IMR-90 (cell line): ENCODE measurements at regions of chr6 and their contacts with region 1.

Region 1: GRCh38 chr6:124961777-124962611 is at the start of gene RNF217:
- DNase-seq: peak; percentile 76
- ATAC-seq: peak; percentile 54
- H3K4me3 ChIP-seq: peak within 1 kb of the TSS; percentile 83
- H3K27ac ChIP-seq: peak within 1 kb of the TSS; percentile 94
- H3K4me1 ChIP-seq: peaks cover 4% of the 10 kb centered on the region; the same call in 1 of the 2 replicates
- H3K27me3 ChIP-seq: no peaks in the 10 kb centered on the region
- CTCF ChIP-seq: 0 out of 2 replicates have a peak, but pooled peaks have one; percentile 17
- POLR2A ChIP-seq: peak; percentile 54
- RAD21 ChIP-seq: no peak
- total RNA-seq, gene RNF217: 16.7 and 20.4 TPM in 2 replicates

Region 2: DNA sequence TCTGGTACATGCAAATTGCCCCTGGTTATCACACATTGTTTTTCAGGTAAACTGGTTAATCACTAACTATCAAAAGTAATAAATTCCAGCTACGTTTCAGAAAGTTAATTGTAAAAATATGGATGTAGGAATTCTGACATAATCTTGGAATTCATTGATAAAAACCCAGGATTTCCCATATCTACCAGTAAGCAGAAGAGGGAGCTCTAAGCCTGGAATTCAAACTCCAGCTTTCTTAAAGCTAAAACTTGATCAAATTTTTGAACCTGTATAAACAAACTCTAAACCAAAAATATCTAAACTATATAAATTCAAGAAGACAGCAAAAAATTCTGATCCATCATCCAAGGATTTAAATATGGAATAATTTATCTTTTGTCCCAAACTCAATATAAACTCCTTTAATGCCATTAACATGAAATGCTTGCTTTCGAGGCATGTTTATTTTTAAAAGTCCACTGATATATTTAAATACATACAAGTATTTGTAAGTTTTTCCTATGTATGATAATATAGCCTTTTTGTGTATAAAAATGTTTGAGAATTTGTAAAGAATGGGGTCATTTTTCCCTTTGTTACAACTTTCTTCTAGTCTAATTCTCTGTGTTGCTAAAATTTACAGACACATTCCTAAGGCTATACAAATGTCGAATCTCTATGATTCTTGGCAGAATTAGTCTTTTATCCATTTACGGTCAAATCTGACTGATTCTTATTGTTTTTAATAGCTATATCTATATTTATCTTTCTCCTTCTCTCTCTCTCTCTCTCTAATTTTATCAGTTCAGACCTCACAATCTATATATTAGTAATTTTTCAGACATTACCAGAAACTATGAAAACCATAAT is 91.2 kb before region 1 on chr6:
- CTCF ChIA-PET with region 1: no interaction called
- POLR2A ChIA-PET with region 1: no interaction called
- dilution Hi-C with region 1: no loop called
- in situ Hi-C with region 1: no loop called
- intact Hi-C with region 1: loop called (anchors 1 kb)
- DNase-seq: peak; percentile 64
- ATAC-seq: peak; percentile 67
- H3K4me3 ChIP-seq: no peak overlapping the region
- H3K27ac ChIP-seq: no peak overlapping the region
- H3K4me1 ChIP-seq: peaks cover 2% of the 10 kb centered on the region; the same call in 1 of the 2 replicates
- H3K27me3 ChIP-seq: no peaks in the 10 kb centered on the region
- CTCF ChIP-seq: peak; percentile 83
- POLR2A ChIP-seq: no peak
- RAD21 ChIP-seq: peak; percentile 86

Region 3: GRCh38 chr6:124941259-124941658 is 20.7 kb before region 1 on chr6:
- CTCF ChIA-PET with region 1: no interaction called
- POLR2A ChIA-PET with region 1: no interaction called
- dilution Hi-C with region 1: no loop called
- in situ Hi-C with region 1: no loop called
- intact Hi-C with region 1: no loop called
- DNase-seq: no peak
- ATAC-seq: no peak
- H3K4me3 ChIP-seq: no peak overlapping the region
- H3K27ac ChIP-seq: no peak overlapping the region
- H3K4me1 ChIP-seq: no peaks in the 10 kb centered on the region
- H3K27me3 ChIP-seq: no peaks in the 10 kb centered on the region
- CTCF ChIP-seq: no peak
- POLR2A ChIP-seq: no peak
- RAD21 ChIP-seq: no peak

Region 4: DNA sequence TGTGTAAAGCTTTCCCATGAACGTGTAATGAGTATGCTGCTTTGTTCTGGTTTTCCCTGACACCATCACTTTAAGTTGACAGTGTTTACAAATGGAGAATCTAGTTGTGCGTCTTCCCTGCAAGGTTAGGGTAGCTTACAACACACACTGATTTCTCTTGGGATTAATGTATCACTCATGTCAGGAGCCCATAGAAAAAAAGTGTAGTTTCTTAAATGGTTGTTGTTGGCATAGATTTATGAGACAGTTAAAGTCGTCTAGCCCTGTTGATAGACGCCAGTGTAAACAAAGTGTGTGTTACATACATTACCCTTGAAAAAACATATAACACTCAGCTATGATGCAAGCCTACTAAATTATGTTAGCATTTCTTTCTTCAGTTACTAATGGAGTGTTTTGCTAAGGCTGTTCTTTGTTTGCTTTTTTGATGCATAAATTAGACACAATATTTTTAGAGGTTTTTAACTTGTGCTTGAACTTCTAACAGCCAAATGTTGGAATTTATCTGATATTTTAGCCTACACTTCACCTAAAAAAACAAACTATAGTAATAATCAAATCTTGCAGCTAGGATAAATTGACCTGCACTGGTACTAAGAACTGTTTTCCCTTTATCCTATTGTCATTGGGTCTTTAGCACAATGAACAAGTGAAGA is 88.8 kb after region 1 on chr6:
- CTCF ChIA-PET with region 1: no interaction called
- POLR2A ChIA-PET with region 1: no interaction called
- dilution Hi-C with region 1: no loop called
- in situ Hi-C with region 1: no loop called
- intact Hi-C with region 1: loop called (anchors 2 kb)
- DNase-seq: peak; percentile 64
- ATAC-seq: peak; percentile 55
- H3K4me3 ChIP-seq: no peak overlapping the region
- H3K27ac ChIP-seq: no peak overlapping the region
- H3K4me1 ChIP-seq: peaks cover 10% of the 10 kb centered on the region
- H3K27me3 ChIP-seq: no peaks in the 10 kb centered on the region
- CTCF ChIP-seq: no peak
- POLR2A ChIP-seq: no peak
- RAD21 ChIP-seq: no peak

Region 5: DNA sequence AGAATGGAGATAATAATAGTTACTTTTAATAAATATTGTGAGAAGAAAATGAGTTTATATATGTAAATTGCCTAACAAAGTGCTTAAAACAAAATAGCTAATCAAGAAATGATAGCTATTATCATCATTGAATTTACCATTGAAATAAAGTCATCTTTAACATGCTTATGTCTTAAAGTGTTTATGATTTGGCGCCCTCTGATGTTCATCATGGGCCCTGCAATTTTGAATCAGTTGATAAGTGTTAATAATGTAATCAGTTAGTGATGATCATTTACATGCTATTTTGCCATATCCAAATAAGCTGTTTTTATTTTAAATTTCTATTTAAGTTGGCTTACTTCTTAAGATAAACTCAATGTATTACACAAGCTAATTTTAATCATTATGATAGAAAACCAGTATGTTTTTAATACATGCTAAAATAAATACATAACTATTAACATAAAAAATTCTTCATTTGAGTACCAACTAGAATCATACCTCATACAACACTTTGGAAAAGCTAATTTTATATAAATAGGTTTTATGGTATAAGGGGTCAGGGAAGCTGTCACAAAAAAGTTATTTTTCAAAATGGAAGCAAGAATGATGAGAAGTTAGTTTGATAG is 152.4 kb after region 1 on chr6:
- CTCF ChIA-PET with region 1: interaction called, 5 read pairs
- POLR2A ChIA-PET with region 1: interaction called, 3 read pairs
- dilution Hi-C with region 1: no loop called
- in situ Hi-C with region 1: loop called (anchors 25 kb)
- intact Hi-C with region 1: loop called (anchors 1 kb)
- DNase-seq: peak; percentile 61
- ATAC-seq: peak; percentile 51; the same call in 1 of the 2 replicates
- H3K4me3 ChIP-seq: no peak overlapping the region
- H3K27ac ChIP-seq: no peak overlapping the region
- H3K4me1 ChIP-seq: no peaks in the 10 kb centered on the region
- H3K27me3 ChIP-seq: no peaks in the 10 kb centered on the region
- CTCF ChIP-seq: peak; percentile 89
- POLR2A ChIP-seq: no peak
- RAD21 ChIP-seq: peak; percentile 88

Region 6: GRCh38 chr6:125301435-125302391 is 339.7 kb after region 1 on chr6 and contains the start of gene HDDC2:
- CTCF ChIA-PET with region 1: no interaction called
- POLR2A ChIA-PET with region 1: interaction called, 4 read pairs
- dilution Hi-C with region 1: no loop called
- in situ Hi-C with region 1: no loop called
- intact Hi-C with region 1: loop called (anchors 1 kb)
- DNase-seq: peak; percentile 73
- ATAC-seq: peak; percentile 84
- H3K4me3 ChIP-seq: peak within 1 kb of the TSS; percentile 84
- H3K27ac ChIP-seq: peak within 1 kb of the TSS; percentile 98
- H3K4me1 ChIP-seq: peaks cover 4% of the 10 kb centered on the region
- H3K27me3 ChIP-seq: no peaks in the 10 kb centered on the region
- CTCF ChIP-seq: no peak
- POLR2A ChIP-seq: peak; percentile 55; the same call in 1 of the 2 replicates
- RAD21 ChIP-seq: no peak
- total RNA-seq, gene HDDC2: 40.9 and 51.4 TPM in 2 replicates